Naive thymus-derived CD8-positive, alpha-beta T cell (primary cell): ENCODE measurements at regions of chr14 and their contacts with region 1.

Region 1: GRCh38 chr14:70988452-70988851 is 81.2 kb downstream of the PCNX1 start:
- DNase-seq: no peak
- ATAC-seq: peak; percentile 49 to 70
- H3K4me3 Mint-ChIP-seq: peak overlapping the region; percentile 53 to 76 (median 70)
- H3K27ac Mint-ChIP-seq: peak overlapping the region in 9 of 10 donors; percentile 31 to 90 (median 54)
- H3K4me1 Mint-ChIP-seq: peaks cover 10 to 49% (median 29%) of the 10 kb centered on the region in 4 donors
- H3K27me3 Mint-ChIP-seq: no peaks in the 10 kb centered on the region

Region 2: GRCh38 chr14:70999117-70999516 is 10.7 kb after region 1 on chr14:
- POLR2A ChIA-PET with region 1: interaction called, 10 read pairs
- DNase-seq: peak in 3 of 10 donors; percentile 44 to 65 (median 64)
- ATAC-seq: peak; percentile 89 to 94
- H3K4me3 Mint-ChIP-seq: peak overlapping the region; percentile 49 to 82 (median 73)
- H3K27ac Mint-ChIP-seq: peak overlapping the region; percentile 57 to 97 (median 86)
- H3K4me1 Mint-ChIP-seq: peaks cover 22 to 84% (median 71%) of the 10 kb centered on the region in 4 donors
- H3K27me3 Mint-ChIP-seq: no peaks in the 10 kb centered on the region

Region 3: DNA sequence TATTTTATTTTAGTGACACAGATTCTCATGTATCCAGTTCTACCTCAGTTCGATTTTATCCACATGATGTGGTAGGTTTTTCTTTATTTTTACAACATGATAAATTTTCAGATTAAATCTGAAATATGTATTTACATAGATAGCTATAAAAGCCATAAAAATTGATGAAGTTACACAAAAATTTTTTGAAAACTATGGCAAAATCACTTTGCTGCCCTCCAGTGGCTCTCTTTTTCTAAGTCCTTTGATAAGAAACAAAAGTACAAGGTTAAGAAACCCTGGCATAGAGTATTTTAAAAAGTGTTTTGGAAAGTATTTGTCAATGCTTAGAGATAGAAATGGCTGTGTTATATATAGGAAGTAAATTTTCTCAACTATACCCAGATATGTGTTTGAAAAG is 23.0 kb after region 1 on chr14:
- POLR2A ChIA-PET with region 1: no interaction called
- DNase-seq: peak in 2 of 10 donors; percentile 7 to 24
- ATAC-seq: no peak
- H3K4me3 Mint-ChIP-seq: no peak overlapping the region
- H3K27ac Mint-ChIP-seq: peak overlapping the region in 6 of 10 donors; percentile 1 to 82 (median 51)
- H3K4me1 Mint-ChIP-seq: peaks cover 10 to 36% (median 30%) of the 10 kb centered on the region in 4 donors
- H3K27me3 Mint-ChIP-seq: no peaks in the 10 kb centered on the region

Region 4: DNA sequence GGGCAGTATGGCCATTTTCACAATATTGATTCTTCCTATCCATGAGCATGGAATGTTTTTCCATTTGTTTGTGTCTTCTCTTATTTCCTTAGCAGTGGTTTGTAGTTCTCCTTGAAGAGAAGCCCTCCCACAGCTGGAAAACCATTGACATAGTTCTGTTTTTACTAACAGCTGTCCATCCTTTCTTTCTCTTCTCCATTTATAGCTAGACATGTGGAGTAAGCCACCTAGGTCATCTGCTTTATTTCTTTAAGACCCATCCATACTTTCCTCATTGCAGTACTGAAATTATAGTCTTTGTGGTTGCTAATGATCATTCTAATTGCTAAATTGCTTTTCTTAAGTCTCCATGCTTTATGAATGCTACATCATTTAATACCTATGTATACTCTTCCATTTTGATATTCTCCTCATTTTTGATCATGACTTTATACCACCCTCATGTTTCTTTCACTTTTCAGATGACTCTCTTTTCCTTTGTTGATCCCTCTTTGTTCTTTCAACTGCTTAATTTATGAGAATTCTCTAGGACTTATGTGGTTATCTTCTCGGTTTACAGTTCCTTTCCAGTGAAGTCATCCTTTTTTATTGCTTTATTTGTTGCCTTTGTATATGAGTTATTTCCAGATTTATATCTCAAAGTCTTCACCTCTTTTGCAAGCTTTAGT is 33.0 kb after region 1 on chr14:
- POLR2A ChIA-PET with region 1: no interaction called
- DNase-seq: no peak
- ATAC-seq: no peak
- H3K4me3 Mint-ChIP-seq: peak overlapping the region in 1 of 10 donors; percentile 7
- H3K27ac Mint-ChIP-seq: peak overlapping the region in 7 of 10 donors; percentile 2 to 68 (median 8)
- H3K4me1 Mint-ChIP-seq: peaks cover 13 to 23% (median 22%) of the 10 kb centered on the region in 4 donors
- H3K27me3 Mint-ChIP-seq: no peaks in the 10 kb centered on the region